ENCODE measurements at regions of chr3 and their contacts with region 1.

Region 1: DNA sequence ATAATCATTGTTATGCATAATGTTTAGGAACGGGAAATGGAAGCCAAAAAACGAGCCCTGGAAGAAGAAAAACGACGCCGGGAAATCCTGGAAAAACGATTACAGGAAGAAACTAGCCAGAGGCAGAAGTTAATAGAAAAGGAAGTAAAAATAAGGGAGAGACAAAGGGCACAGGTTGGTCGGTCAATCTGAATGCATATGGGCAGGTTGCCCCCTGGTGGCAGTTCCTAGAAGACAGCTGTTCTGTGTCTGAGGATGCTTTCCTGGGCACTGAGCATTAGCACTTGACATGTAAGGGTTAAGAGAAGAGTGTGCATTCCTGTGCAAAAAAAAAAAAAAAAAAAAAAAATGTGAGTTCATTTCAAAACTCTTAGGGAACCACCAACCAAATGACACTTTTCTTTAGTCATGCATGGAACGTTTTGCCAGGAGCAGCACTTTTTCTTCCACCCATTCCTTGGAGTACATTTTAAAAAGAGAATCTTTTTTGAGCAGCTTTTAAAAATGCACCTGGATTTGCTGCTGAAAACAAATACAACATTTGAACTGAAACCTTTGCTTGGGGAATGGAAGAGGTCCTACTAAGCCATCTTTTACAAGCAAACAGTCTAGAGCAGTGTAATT is 11.1 kb upstream of the ABHD10 start:
- DNase-seq: peak; percentile 83
- H3K4me3 Mint-ChIP-seq: no peak overlapping the region
- H3K27ac Mint-ChIP-seq: peak overlapping the region; percentile 74
- H3K4me1 Mint-ChIP-seq: peaks cover 14% of the 10 kb centered on the region
- H3K27me3 Mint-ChIP-seq: no peaks in the 10 kb centered on the region
- CTCF ChIP-seq: peak; percentile 74

Region 2: GRCh38 chr3:111668912-111669488 is 298.8 kb before region 1 on chr3:
- CTCF ChIA-PET with region 1: interaction called, 6 read pairs
- intact Hi-C with region 1: loop called (anchors 1 kb)
- DNase-seq: no peak
- H3K4me3 Mint-ChIP-seq: no peak overlapping the region
- H3K27ac Mint-ChIP-seq: no peak overlapping the region
- H3K4me1 Mint-ChIP-seq: peaks cover 33% of the 10 kb centered on the region
- H3K27me3 Mint-ChIP-seq: no peaks in the 10 kb centered on the region
- CTCF ChIP-seq: peak; percentile 32

Region 3: DNA sequence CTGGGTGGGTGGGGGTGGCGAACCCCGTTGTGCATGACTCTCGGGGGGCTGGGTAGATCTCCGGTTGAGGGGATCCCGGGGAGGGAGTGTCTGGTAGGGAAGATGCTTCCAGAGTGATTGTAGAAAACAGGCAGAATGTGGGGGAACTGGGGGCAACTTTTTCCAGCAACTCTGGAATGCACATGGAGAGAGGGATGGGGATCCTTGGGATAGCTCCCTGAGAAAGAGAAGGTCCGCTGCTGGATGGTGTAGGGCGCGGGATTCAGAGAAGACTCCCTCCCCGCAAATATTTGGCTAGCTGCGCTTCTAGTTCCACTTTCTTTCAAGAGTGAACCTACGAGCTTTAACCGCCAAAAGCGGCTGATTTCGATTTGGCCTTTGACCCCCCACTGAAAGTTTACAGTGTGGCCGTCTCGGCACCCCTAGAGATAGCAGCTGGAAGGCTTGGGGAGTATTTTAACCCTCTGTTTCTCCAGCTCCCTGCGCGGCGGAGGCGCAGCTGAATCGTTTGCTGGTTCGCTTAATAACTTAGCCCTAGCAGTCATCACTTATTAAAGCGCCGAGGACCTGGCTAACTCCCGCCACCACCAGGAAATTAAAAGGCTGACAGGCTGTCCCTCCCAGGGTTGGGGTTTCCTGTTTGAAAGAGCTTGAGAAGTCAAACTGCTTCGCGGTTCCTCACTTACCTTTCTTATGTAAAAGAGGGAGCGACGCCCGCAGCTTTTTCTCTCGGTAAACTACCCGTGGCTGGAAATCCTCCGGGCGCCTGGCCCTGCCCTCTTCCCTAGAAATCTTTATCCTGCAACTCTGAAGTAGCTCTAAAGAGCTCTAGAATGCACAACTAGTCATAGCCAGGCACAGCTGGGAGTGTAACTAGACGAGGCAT is 107.5 kb before region 1 on chr3:
- CTCF ChIA-PET with region 1: interaction called, 11 read pairs
- intact Hi-C with region 1: no loop called
- DNase-seq: peak; percentile 79
- H3K4me3 Mint-ChIP-seq: peak overlapping the region; percentile 88
- H3K27ac Mint-ChIP-seq: peak overlapping the region; percentile 80
- H3K4me1 Mint-ChIP-seq: peaks cover 46% of the 10 kb centered on the region
- H3K27me3 Mint-ChIP-seq: no peaks in the 10 kb centered on the region
- CTCF ChIP-seq: peak; percentile 25

Region 4: DNA sequence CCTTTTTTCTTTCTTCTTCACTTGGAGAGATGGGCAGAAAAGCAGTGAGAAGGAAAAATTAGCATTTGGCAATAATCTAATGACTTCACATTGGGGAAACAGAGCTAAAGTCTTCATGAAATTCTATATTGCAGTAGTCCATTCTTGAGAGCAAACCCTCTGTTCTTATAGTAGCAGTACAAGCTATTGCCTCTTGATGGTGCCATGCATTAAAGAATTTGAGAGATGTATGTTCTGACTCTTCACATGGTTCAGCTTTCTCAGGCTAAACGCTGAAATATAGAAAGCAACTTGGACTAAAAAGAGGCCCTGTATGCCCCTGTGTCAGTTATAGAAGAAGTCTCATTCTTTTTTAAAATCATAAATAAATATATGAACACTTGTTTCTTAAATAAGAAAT is 72.7 kb before region 1 on chr3:
- CTCF ChIA-PET with region 1: interaction called, 25 read pairs
- intact Hi-C with region 1: loop called (anchors 1 kb)
- DNase-seq: peak; percentile 12
- H3K4me3 Mint-ChIP-seq: no peak overlapping the region
- H3K27ac Mint-ChIP-seq: peak overlapping the region; percentile 75
- H3K4me1 Mint-ChIP-seq: peaks cover 11% of the 10 kb centered on the region
- H3K27me3 Mint-ChIP-seq: no peaks in the 10 kb centered on the region
- CTCF ChIP-seq: no peak

Measured in Calu3 (cell line).